ENCODE measurements at regions of chr12 and their contacts with region 1.

Region 1: DNA sequence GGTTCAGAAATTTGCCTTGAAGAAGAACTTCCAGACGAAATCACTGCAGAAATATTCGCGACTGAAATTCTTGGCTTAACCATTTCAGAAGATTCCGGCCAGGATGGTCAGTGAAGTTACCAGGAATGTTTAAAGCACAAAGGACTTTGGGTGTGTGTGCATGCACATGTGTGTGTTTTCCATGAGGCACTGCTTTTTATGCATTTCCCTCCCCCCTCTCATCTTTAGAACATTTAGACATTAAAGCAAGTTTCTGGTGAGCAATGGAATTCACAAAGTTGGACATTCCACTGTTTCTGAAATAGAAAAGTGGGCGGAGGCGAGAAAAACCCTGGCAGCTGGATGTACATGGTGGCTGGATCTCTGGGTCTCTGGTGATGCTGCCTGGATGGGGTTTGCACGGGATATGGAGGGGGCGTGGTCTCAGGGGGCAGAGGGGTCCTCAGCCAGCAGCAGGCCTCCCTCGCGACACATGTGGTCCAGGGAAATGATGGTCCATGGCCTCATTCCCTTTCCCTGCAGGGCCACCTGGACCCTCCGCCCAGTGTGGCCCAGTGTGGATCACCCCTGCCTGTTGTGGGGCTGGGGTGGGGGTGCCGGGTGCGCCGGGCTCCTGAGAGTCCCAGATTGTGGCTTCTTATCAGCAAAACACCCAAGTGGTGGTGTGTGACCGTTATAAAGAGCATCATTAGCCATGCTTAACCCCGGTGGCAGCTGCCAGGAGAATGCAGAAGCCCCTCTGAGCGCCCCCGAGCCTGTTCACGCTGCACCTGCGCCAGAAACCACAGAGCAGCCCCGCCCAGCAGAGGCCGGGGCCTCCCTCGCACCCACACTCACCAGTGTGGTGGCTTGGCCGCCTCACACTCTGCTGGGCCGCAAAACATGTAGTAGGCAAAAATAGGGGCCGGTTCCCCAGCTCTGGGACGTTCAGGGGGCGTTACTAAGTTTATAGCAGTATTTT is 17.8 kb upstream of the BCL7A start:
- DNase-seq: peak in 6 of 35 experiments; percentile 8 to 25 (median 14)
- ATAC-seq: peak in 2 of 4 experiments; percentile 35 to 55
- H3K4me3 ChIP-seq: peak overlapping the region in 1 of 2 donors; percentile 29
- H3K4me3 Mint-ChIP-seq: peak overlapping the region in 1 of 3 donors; percentile 83
- H3K27ac ChIP-seq: no peak overlapping the region
- H3K27ac Mint-ChIP-seq: no peak overlapping the region
- H3K4me1 ChIP-seq: peaks cover 31 to 44% of the 10 kb centered on the region in 2 experiments
- H3K4me1 Mint-ChIP-seq: peaks cover 20 to 39% (median 36%) of the 10 kb centered on the region in 3 donors
- H3K27me3 ChIP-seq: peaks cover 0 to 33% of the 10 kb centered on the region in 2 experiments
- H3K27me3 Mint-ChIP-seq: peaks cover 0 to 15% of the 10 kb centered on the region in 2 donors

Region 2: GRCh38 chr12:121955258-121956235 is 48.4 kb before region 1 on chr12:
- CTCF ChIA-PET with region 1: no interaction called
- POLR2A ChIA-PET with region 1: no interaction called
- DNase-seq: no peak
- ATAC-seq: no peak
- H3K4me3 ChIP-seq: no peak overlapping the region
- H3K4me3 Mint-ChIP-seq: no peak overlapping the region
- H3K27ac ChIP-seq: no peak overlapping the region
- H3K27ac Mint-ChIP-seq: no peak overlapping the region
- H3K4me1 ChIP-seq: no peaks in the 10 kb centered on the region
- H3K4me1 Mint-ChIP-seq: no peaks in the 10 kb centered on the region
- H3K27me3 ChIP-seq: peaks cover 0 to 4% of the 10 kb centered on the region in 2 experiments
- H3K27me3 Mint-ChIP-seq: no peaks in the 10 kb centered on the region

Region 3: DNA sequence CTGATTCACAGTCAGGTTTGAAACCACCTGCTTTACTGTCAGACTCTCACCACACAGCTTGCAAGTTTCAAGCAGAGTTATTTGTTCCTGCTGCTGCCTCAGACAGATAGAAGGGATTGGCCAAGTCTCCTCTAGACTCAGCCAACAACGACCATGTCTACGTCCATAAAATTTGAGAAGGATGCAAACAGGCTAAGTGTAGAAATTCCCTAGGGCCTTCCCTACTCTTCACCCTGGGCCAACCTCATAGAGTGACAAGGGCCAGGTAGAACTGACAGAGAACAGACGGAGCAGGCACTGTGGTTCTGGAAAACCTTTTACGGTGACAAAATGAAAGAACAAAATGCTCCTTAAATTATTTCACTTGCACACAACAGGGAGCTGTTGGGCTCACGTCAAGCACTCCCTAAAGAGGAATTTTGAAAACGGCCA is 379.0 kb after region 1 on chr12:
- CTCF ChIA-PET with region 1: no interaction called
- POLR2A ChIA-PET with region 1: interaction called in 1 of 2 experiments, 11 read pairs
- DNase-seq: no peak
- ATAC-seq: no peak
- H3K4me3 ChIP-seq: no peak overlapping the region
- H3K4me3 Mint-ChIP-seq: no peak overlapping the region
- H3K27ac ChIP-seq: no peak overlapping the region
- H3K27ac Mint-ChIP-seq: no peak overlapping the region
- H3K4me1 ChIP-seq: no peaks in the 10 kb centered on the region
- H3K4me1 Mint-ChIP-seq: peaks cover 7 to 15% (median 13%) of the 10 kb centered on the region in 3 donors
- H3K27me3 ChIP-seq: no peaks in the 10 kb centered on the region
- H3K27me3 Mint-ChIP-seq: no peaks in the 10 kb centered on the region

Region 4: GRCh38 chr12:123278101-123278627 is 1274.2 kb after region 1 on chr12:
- CTCF ChIA-PET with region 1: no interaction called
- POLR2A ChIA-PET with region 1: no interaction called
- DNase-seq: no peak
- ATAC-seq: no peak
- H3K4me3 ChIP-seq: no peak overlapping the region
- H3K4me3 Mint-ChIP-seq: no peak overlapping the region
- H3K27ac ChIP-seq: no peak overlapping the region
- H3K27ac Mint-ChIP-seq: no peak overlapping the region
- H3K4me1 ChIP-seq: no peaks in the 10 kb centered on the region
- H3K4me1 Mint-ChIP-seq: peaks cover 0 to 3% (median 0%) of the 10 kb centered on the region in 3 donors
- H3K27me3 ChIP-seq: no peaks in the 10 kb centered on the region
- H3K27me3 Mint-ChIP-seq: no peaks in the 10 kb centered on the region